ENCODE measurements at regions of chr1 and their contacts with region 1.

Region 1: GRCh38 chr1:90605070-90605469 is 112.0 kb downstream of the BARHL2 start:
- DNase-seq: no peak
- H3K4me3 ChIP-seq: no peak overlapping the region
- H3K27ac ChIP-seq: no peak overlapping the region
- H3K4me1 ChIP-seq: no peaks in the 10 kb centered on the region
- H3K27me3 ChIP-seq: no peaks in the 10 kb centered on the region
- CTCF ChIP-seq: no peak
- POLR2A ChIP-seq: no peak

Region 2: DNA sequence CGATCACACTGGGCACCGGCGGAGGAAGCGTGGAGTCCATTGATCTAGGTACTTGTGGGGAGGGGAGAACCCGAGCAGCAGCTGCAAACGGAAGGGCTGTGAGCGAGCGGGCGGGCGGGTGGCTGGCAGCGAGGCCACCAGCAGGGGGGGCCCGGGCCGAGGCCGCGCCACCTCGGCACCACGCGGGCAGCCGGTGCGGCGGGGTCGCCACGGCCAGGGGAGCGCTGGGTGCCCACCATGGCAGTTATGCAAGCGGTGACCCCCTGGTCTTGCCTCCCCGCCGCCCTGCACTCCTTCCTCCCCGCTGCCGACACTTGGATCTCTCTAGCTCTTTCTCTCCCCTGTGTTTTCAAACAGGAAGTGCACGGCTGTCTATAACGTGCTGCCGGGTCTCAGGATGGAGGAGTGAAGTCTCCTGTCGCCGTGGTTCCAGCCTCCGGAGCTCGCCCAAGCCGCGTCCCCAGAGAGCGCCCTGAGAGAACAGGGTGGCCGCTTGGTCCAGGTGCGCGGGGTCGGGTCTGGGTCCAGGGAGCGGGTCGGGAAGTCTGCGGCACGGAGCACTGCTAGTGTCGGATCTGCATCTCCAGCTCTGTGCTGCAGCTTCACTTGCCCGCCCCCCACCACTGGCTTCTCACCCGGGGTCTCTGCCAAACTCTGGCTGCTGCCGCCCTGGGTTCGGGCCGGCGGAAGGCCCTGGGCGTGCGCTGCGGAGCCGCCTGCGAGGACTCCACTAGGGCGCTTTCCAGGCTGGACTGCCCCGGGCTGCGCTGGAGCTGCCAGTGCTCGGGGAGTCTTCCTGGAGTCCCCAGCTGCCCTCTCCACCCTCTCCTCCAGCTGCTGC is 761.6 kb before region 1 on chr1:
- intact Hi-C with region 1: no loop called
- DNase-seq: peak; percentile 43 to 58
- H3K4me3 ChIP-seq: peak overlapping the region; percentile 70 to 85 (median 85)
- H3K27ac ChIP-seq: peak overlapping the region; percentile 75 to 86
- H3K4me1 ChIP-seq: peaks cover 0 to 5% of the 10 kb centered on the region in 2 donors
- H3K27me3 ChIP-seq: no peaks in the 10 kb centered on the region
- CTCF ChIP-seq: peak in 2 of 3 donors; percentile 28 to 74
- POLR2A ChIP-seq: no peak

Region 3: DNA sequence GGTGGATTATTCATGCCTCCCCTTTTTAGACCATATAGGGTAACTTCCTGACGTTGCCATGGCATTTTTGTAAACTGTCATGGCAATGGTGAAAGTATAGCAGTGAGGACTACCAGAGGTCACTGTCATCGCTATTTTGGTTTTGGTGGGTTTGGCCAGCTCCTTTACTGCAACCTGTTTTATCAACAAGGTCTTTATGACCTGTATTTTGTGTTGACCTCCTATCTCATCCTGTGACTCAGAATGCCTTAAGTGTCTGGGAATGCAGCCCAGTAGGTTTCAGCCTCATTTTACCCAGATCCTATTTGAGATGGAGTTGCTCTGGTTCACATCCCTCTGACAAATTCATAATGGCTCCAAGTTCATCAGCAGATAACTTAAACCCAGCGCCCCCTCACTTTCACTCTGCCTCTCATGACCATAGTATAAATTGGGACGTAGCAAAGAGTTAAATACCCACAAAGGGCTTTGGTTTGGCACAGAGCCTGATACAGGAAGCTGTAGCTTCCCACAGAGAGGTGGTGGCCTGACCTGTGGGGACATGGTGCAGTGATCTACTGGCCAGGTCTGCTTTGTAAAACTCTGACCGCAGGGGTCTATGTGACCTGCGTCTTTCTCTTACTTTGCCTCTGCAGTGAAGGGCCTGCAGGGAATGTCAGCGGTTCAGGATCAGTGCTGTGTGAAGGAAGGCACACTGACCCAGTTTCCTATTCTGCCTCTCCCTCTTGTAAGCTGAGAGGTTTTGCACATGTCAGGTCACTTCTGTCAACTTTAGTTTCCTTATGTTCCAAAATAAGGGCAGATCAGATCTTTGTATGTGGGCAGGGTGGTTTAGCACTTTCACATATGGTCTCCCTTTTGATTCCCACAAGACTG is 494.9 kb after region 1 on chr1:
- intact Hi-C with region 1: loop called (anchors 10 kb)
- DNase-seq: no peak
- H3K4me3 ChIP-seq: no peak overlapping the region
- H3K27ac ChIP-seq: peak overlapping the region; percentile 39 to 67
- H3K4me1 ChIP-seq: no peaks in the 10 kb centered on the region
- H3K27me3 ChIP-seq: no peaks in the 10 kb centered on the region
- CTCF ChIP-seq: no peak
- POLR2A ChIP-seq: no peak